ENCODE measurements at regions of chr7 and their contacts with region 1.

Region 1: DNA sequence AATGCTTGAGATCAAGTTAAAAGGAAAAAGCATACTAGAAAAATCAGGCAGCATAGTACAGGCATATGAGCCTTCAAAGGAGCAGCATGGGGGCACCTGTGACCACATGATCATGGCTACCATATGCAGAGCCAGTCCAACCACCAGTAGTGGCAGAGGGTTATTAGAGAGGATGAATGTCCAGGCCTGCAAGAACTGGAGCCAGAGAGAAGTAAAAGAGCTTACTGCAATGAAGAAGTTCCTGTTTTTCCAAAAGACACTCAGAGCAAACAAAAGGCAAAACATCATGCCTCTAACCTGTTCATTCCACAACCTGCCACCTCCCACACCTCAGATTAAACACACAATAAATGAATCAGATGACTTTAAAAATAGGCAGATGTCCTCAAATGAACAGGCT is 99.6 kb upstream of the NAMPT start:
- DNase-seq: no peak

Region 2: DNA sequence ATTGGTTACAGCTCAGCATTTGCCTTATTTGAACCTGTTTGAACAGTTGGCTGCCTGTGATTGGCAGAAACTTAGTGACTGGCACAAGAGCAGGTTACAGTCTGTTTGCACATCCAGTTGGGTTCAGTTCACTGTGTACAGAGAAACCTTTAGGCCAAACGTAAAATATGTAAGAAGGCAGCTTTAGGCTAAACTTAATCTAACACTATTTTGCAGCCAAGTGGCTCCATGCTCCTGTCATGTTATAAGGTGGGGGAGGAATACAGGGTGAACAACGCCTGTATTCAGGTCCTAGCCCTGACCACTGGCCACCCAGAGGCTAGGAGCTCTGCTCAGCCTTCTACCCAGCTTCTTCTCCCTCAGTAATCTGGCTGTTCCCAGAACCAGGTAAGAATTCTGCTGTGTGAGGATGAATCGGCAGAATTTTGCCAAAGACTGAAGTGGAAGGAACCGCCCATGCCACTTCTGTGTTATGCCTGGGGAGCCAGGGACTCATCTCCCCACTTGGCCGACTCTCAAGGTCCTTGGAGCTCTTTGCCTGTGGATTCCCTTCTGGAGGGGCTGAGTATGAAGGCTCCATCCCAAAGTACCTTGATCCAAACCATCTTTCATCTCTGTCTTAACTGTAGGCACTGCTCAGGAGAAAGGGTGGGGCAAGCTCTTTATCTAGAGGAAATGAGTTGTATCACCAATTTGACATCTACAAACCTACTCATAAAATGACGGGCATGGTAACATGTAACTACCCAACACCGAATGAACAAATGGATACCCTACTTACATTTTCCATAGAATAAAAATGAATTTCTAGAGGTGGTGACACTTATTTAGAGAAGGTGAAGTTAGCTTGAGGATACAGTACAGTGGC is 64.9 kb after region 1 on chr7:
- intact Hi-C with region 1: loop called (anchors 10 kb)
- DNase-seq: no peak

Region 3: DNA sequence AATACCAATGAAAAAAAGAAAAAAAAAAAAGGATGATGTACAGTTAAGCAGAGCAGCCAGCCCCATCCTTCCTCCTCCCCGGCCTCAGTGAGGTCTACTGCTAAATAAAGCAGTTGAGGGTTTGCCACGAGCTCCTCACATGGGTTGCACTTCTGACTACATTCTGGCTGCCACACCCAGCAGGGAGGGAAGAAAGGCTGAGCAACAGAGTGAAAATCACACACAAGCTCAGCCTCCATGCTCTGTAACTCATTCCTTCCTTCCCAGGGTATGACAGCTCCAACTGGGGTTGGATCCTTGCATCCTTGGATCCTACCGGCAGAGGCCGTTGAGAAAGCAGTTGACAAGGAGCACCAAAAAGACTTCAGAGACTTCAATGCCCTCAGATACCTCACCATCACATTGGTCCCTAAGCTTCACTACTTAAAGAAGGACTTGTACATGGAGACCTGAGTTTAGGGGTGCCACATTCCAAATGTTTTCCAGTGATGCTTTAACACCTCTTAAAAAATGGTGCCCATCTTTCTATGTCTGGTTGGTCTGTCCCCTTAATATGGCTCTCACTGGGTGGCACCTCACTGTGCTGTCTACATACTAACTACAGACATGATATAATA is 427.8 kb after region 1 on chr7:
- intact Hi-C with region 1: no loop called
- DNase-seq: peak in 41 of 42 donors; percentile 8 to 71 (median 40)

Measured in head of caudate nucleus (tissue), 42 donors.